PC-3 (cell line): ENCODE measurements at regions of chr5 and their contacts with region 1.

Region 1: DNA sequence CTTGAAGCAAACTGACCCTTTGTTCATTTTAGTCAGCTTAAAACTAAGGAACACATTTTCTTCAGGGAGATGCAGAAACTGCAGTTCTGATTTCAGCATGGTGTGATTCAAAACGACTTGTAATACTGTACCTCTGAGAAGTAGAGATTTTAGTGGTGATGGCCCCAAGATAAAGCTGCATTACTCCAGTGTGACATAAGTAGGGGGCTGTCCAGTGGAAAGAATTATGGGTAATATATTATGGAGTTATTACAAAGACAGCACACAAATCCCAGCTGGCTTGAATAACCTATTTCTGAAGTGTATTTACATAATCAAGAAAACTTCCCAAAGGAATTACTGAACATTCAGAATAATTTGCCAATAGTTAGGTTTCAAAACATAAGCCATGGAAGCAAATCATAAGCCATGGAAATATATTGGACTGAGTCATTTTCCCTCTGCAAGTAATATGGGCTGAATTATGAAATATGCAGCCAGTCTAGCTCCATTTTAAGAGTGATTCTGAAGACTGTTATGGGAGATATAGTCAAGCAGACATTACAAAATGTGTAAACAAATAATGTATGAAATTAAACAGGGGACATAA is 133.7 kb upstream of the FBXL17 start:
- DNase-seq: no peak
- ATAC-seq: no peak
- H3K4me3 ChIP-seq: no peak overlapping the region
- H3K27ac ChIP-seq: no peak overlapping the region
- H3K4me1 ChIP-seq: no peaks in the 10 kb centered on the region
- H3K27me3 ChIP-seq: peaks cover 25% of the 10 kb centered on the region
- CTCF ChIP-seq: no peak

Region 2: DNA sequence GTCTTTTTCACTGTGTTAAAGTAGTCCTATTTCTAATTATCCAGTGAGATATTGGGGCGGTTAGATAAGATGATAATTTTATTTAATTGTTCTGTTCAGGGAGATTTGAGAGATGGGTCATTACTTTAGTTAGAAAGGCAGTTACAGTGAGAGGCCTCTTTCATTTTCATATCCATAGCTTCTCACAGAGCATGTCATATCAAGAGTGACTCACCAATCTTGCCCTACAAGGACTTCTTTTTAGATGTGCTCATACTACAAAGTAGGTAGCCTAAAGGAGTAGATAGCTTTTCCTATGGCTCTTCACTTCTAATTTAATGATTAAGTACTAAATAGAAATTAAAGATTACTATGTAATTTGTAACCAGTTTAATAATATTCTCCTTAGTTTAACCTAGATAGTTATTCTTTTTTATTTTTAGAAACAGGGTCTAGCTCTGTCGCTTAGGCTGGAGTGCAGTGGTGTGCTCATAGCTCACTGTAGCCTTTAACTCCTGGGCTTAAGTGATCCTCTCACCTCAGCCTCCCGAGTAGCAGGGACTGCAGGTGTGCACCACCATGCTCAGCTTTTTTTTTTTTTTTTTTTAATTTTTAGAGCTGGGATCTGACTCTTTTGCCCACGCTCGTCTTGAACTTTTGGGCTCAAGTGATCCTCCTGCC is 303.1 kb after region 1 on chr5:
- CTCF ChIA-PET with region 1: no interaction called
- POLR2A ChIA-PET with region 1: interaction called, 12 read pairs
- intact Hi-C with region 1: no loop called
- DNase-seq: peak; percentile 51
- ATAC-seq: peak; percentile 64; the same call in 1 of the 2 replicates
- H3K4me3 ChIP-seq: no peak overlapping the region
- H3K27ac ChIP-seq: no peak overlapping the region
- H3K4me1 ChIP-seq: no peaks in the 10 kb centered on the region
- H3K27me3 ChIP-seq: no peaks in the 10 kb centered on the region
- CTCF ChIP-seq: no peak